Activated CD4-positive, alpha-beta T cell treated with anti-CD3 and anti-CD28 coated beads, Interleukin-2, amount 10 ng/mL, durations not matched to agents 24 days and 14 days (primary cell): ENCODE measurements at regions of chr18 and their contacts with region 1.

Region 1: DNA sequence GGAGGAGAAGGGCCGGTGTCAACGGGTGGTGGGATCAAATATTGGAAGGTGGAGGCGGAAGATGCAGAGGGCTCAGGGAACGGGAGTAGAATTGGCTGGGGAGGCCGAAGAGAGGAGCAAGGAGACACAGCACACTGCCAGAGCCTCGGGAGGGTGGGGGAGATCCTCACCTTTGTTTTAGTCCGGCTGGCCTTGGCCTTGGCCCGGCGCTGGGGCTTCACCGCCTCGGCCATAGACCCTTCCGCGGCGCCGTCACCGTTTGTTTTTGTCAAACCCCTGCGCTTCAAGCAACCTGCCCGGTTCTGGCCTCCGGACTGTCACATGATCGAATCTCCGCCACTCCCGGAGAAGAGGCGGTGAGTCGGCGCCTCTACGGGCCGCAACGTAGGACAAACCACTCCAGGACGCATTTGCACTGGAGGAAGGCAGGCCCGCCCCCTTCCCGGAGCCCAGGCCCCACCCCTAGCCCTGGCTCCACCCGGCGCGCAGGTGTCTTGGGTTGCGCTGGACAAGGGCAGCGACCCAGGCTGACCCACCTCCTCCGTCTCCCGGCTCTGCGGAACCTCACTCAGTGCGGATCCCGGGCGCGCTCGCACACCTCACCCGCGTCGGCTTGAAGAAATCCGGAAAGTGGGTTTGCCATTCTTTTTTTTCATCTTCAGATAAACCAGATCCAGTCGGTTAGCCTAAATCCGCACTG is at the start of gene EPG5:
- DNase-seq: peak; percentile 98
- H3K4me3 Mint-ChIP-seq: peak within 1 kb of the TSS; percentile 99
- H3K27ac Mint-ChIP-seq: peak within 1 kb of the TSS; percentile 94
- H3K4me1 Mint-ChIP-seq: peaks cover 26% of the 10 kb centered on the region
- H3K27me3 Mint-ChIP-seq: peaks cover 3% of the 10 kb centered on the region
- total RNA-seq, gene EPG5: 14.9 and 15.5 TPM in 2 replicates

Region 2: DNA sequence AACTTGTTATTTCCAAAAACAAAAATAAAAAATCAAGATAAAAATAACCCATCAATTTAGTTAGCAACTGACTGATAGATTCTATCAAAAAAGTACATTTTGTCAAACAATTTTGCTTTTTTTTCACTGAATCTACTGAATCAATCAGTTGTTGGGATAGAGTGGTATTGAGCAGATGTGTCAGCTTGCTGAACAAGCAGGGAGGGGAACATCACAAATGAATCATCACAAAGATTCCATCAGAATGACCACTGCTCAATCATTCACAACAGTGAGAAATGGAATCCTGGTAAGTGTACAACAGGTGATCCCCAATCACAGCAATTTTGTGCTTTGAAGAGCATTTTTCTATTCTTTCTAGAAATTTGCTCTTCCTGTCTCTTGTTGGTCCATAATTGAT is 364.2 kb before region 1 on chr18:
- intact Hi-C with region 1: no loop called
- DNase-seq: no peak
- H3K4me3 Mint-ChIP-seq: no peak overlapping the region
- H3K27ac Mint-ChIP-seq: no peak overlapping the region
- H3K4me1 Mint-ChIP-seq: no peaks in the 10 kb centered on the region
- H3K27me3 Mint-ChIP-seq: peaks cover 10% of the 10 kb centered on the region

Region 3: GRCh38 chr18:45670281-45670962 is 296.7 kb before region 1 on chr18:
- intact Hi-C with region 1: loop called (anchors 2 kb)
- DNase-seq: peak; percentile 79
- H3K4me3 Mint-ChIP-seq: peak overlapping the region; percentile 53
- H3K27ac Mint-ChIP-seq: peak overlapping the region; percentile 70
- H3K4me1 Mint-ChIP-seq: peaks cover 50% of the 10 kb centered on the region
- H3K27me3 Mint-ChIP-seq: peaks cover 26% of the 10 kb centered on the region